WTC11 (cell line): ENCODE measurements at regions of chr9 and their contacts with region 1.

Region 1: DNA sequence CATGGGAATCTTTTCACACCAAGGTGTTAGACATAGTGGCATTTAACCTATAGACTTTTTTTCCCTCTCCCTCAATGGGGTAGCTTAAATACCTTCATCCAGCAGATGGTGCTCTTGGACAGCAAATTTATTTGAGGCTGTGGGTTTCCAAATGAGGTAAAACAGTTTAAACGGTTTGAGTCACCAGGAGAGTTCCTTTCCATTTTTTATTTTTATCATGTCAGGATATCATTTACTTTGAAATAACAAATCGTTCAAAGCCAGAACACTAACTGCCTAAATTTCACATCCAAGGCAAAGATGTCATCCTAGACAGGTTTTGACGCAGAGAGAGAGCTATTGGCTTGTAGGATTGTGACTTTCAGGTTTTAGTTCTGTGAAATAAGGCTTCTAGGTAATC is 69.7 kb downstream of the KDM4C start:
- DNase-seq: peak; percentile 32
- ATAC-seq: peak; percentile 89
- H3K4me3 Mint-ChIP-seq: no peak overlapping the region
- H3K27ac Mint-ChIP-seq: peak overlapping the region; percentile 73; the same call in 1 of the 2 replicates
- H3K4me1 Mint-ChIP-seq: peaks cover 15% of the 10 kb centered on the region
- H3K27me3 Mint-ChIP-seq: no peaks in the 10 kb centered on the region
- CTCF ChIP-seq: peak; percentile 44

Region 2: GRCh38 chr9:6793203-6793602 is 34.2 kb before region 1 on chr9:
- CTCF ChIA-PET with region 1: no interaction called
- POLR2A ChIA-PET with region 1: no interaction called
- DNase-seq: no peak
- ATAC-seq: no peak
- H3K4me3 Mint-ChIP-seq: no peak overlapping the region
- H3K27ac Mint-ChIP-seq: no peak overlapping the region; the same call in 1 of the 2 replicates
- H3K4me1 Mint-ChIP-seq: peaks cover 29% of the 10 kb centered on the region
- H3K27me3 Mint-ChIP-seq: no peaks in the 10 kb centered on the region
- CTCF ChIP-seq: no peak

Region 3: DNA sequence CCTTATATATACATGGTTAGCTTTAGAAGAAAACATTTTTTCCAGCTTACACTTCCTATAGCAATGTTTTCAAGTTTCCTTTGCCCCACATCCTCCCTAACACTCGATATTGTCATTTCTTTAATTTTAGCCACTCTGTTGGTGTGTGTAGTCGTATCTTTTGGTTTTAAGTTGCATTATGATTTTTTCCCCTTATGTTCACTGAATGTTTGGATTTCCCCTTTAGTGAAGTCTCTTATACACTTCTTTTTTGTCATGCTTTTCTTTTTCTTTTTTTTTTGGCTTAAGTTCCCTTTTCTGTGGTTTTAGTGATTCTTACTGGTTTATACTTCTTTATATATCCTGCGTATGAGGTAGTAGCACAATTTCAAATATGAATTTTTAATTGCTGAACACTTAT is 10.9 kb before region 1 on chr9:
- CTCF ChIA-PET with region 1: interaction called, 12 read pairs
- POLR2A ChIA-PET with region 1: no interaction called
- DNase-seq: no peak
- ATAC-seq: no peak
- H3K4me3 Mint-ChIP-seq: no peak overlapping the region
- H3K27ac Mint-ChIP-seq: no peak overlapping the region
- H3K4me1 Mint-ChIP-seq: peaks cover 26% of the 10 kb centered on the region
- H3K27me3 Mint-ChIP-seq: no peaks in the 10 kb centered on the region
- CTCF ChIP-seq: no peak

Region 4: GRCh38 chr9:6845880-6846279 is 18.4 kb after region 1 on chr9:
- CTCF ChIA-PET with region 1: interaction called, 25 read pairs
- POLR2A ChIA-PET with region 1: no interaction called
- DNase-seq: peak; percentile 29
- ATAC-seq: peak; percentile 94
- H3K4me3 Mint-ChIP-seq: no peak overlapping the region
- H3K27ac Mint-ChIP-seq: peak overlapping the region; percentile 23
- H3K4me1 Mint-ChIP-seq: peaks cover 9% of the 10 kb centered on the region
- H3K27me3 Mint-ChIP-seq: no peaks in the 10 kb centered on the region
- CTCF ChIP-seq: no peak

Region 5: GRCh38 chr9:6907772-6908381 is 80.4 kb after region 1 on chr9:
- CTCF ChIA-PET with region 1: interaction called, 13 read pairs
- POLR2A ChIA-PET with region 1: no interaction called
- DNase-seq: no peak
- ATAC-seq: no peak
- H3K4me3 Mint-ChIP-seq: no peak overlapping the region
- H3K27ac Mint-ChIP-seq: peak overlapping the region; percentile 33; the same call in 1 of the 2 replicates
- H3K4me1 Mint-ChIP-seq: peaks cover 44% of the 10 kb centered on the region
- H3K27me3 Mint-ChIP-seq: no peaks in the 10 kb centered on the region
- CTCF ChIP-seq: no peak

Region 6: GRCh38 chr9:6984941-6985578 is 157.6 kb after region 1 on chr9:
- CTCF ChIA-PET with region 1: interaction called, 14 read pairs
- POLR2A ChIA-PET with region 1: no interaction called
- DNase-seq: peak; percentile 21
- ATAC-seq: peak; percentile 99
- H3K4me3 Mint-ChIP-seq: no peak overlapping the region
- H3K27ac Mint-ChIP-seq: peak overlapping the region; percentile 76
- H3K4me1 Mint-ChIP-seq: peaks cover 14% of the 10 kb centered on the region
- H3K27me3 Mint-ChIP-seq: no peaks in the 10 kb centered on the region
- CTCF ChIP-seq: no peak

Region 7: GRCh38 chr9:7186175-7186574 is 358.7 kb after region 1 on chr9:
- CTCF ChIA-PET with region 1: interaction called, 13 read pairs
- POLR2A ChIA-PET with region 1: no interaction called
- DNase-seq: peak; percentile 46
- ATAC-seq: peak; percentile 80
- H3K4me3 Mint-ChIP-seq: no peak overlapping the region
- H3K27ac Mint-ChIP-seq: no peak overlapping the region
- H3K4me1 Mint-ChIP-seq: peaks cover 11% of the 10 kb centered on the region
- H3K27me3 Mint-ChIP-seq: peaks cover 4% of the 10 kb centered on the region; the same call in 1 of the 2 replicates
- CTCF ChIP-seq: peak; percentile 82